ENCODE measurements at regions of chr6 and their contacts with region 1.

Region 1: DNA sequence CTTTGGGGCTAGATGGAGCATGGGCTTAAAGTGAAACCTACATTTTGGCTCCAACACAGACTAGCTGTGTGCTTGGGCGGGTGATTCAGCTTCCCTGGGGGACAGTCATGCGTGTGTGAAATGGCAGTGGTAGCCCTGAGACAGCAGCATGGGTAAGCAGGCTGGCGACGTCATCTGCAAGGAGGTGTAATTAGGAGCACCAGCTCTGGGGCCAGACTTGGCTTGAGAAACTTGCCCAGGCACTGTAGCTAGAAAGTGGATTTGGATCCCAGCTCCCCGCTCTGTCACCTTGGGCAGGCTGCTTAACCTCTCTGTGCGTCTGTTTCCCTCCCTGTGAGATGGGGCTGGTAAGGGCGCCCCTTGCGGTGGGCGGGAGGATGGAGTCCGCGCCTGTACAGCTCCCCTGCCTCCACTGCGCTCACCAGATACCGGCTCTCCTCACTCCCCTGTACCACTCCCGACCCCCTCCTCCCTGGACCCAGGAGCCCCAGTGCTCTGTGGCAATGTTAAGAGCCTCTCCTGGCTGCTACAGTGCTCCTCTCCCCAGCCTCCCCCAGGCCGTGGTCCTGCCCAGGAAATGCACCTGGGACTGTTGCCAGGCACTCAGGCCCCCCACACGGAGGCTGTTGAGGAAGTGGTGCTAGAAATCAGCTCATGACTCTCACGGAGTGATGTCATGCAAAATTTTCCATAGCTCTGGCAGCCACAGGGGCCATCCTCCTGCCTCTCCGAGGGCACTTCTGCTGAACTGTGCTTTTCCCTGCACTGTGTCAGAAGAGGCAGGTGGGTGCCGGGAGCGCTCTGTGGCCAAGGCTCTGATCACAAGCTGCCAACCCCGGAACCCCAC is 44.6 kb downstream of the SYNJ2 start:
- H3K4me3 ChIP-seq: peak overlapping the region; percentile 18
- H3K27ac ChIP-seq: peak overlapping the region; percentile 45; the same call in 1 of the 2 replicates
- H3K4me1 ChIP-seq: peaks cover 16% of the 10 kb centered on the region
- CTCF ChIP-seq: peak; percentile 92

Region 2: DNA sequence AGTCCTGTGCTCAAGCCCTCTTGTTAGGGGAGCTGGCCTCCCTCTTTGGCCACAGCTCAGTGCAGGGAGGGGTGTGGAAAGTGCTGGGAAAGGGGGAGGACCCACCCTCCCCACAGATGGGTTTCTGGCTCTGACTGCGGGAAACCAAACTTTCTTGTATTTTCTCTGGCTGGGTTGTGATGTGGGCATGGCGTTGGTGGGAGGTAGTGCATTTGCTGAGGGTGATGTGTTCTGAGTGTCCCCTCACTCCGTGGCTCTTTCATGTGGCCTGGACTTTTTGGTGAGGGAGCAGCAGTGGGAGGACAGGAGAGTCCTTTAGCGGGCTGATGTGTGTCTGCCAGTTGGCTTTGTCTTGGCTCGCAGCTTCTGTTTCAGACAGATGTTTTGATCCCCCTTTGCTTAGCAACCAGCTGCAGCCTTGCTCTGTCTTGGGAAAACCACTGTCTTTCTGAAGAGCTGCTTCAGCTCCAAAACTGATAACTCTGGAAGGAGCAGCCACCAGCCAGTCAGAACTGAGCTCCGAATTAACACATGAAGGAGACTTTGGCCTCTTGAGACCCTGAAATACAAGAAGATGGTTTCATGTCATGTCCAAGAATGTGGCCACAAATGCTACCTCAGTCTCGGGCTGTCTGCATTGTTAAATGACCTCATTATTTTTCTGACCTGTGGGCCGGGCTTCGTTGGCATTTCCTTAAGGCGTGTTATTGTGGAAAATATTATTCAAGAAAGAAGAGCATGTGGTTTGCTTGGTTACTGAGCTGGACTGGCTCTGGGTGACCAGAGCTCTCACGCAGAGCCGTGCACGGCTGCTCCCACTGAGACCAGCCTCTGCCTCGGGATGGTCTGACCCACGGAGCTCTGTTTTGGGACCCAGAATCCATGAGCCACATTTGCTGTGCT is 23.1 kb before region 1 on chr6:
- CTCF ChIA-PET with region 1: interaction called, 14 read pairs
- POLR2A ChIA-PET with region 1: interaction called, 10 read pairs
- H3K4me3 ChIP-seq: no peak overlapping the region
- H3K27ac ChIP-seq: no peak overlapping the region
- H3K4me1 ChIP-seq: peaks cover 3% of the 10 kb centered on the region
- CTCF ChIP-seq: no peak

Region 3: DNA sequence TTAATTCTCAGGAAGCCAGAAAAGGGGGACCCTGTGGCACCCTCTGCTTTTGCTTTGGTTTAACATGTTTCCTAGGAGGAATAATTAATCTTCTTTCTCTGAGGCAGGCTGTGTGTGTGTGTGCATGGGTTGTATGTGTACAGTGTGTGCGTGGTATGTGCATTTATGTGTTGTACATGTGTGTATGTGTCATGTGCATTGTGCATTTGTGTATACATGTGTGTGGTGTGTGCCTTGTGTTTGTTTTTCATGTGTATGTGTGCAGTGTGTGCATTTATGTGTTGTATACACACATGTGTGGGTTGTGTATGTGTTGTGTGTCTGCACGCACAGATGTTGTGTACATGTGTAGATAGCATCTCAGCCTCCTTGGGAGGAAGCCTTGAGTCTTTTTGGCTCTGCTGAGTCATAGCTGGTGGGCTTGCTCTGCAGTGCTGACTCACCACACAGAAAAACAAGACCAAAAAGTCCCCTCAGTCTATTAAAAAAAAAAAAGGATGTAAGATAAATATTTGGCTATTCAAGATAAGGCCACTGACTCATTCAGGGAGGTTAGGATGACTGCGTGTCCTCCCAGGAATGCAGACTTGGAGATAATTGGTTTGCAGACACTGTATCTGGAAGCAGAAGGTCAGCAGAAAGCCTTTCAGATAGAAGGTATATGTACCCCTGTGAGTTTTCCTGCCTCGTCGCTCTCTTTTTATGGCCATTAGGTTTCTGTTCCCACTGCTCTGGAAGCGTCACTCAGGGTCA is 13.9 kb after region 1 on chr6:
- CTCF ChIA-PET with region 1: interaction called, 33 read pairs
- POLR2A ChIA-PET with region 1: interaction called, 33 read pairs
- H3K4me3 ChIP-seq: 0 out of 2 replicates have a peak overlapping the region, but pooled peaks have one; percentile 1
- H3K27ac ChIP-seq: peak overlapping the region; percentile 57
- H3K4me1 ChIP-seq: peaks cover 36% of the 10 kb centered on the region
- CTCF ChIP-seq: no peak

Region 4: GRCh38 chr6:158060455-158061360 is 34.4 kb after region 1 on chr6:
- CTCF ChIA-PET with region 1: interaction called, 10 read pairs
- POLR2A ChIA-PET with region 1: no interaction called
- H3K4me3 ChIP-seq: no peak overlapping the region
- H3K27ac ChIP-seq: no peak overlapping the region
- H3K4me1 ChIP-seq: no peaks in the 10 kb centered on the region
- CTCF ChIP-seq: no peak

Measured in HEK293 (cell line).